ENCODE measurements at regions of chr18 and their contacts with region 1.

Region 1: GRCh38 chr18:616380-616995 is 19.7 kb downstream of the CLUL1 start:
- DNase-seq: peak; percentile 58
- ATAC-seq: peak; percentile 64; the same call in 1 of the 2 replicates
- H3K4me3 ChIP-seq: no peak overlapping the region
- H3K27ac ChIP-seq: no peak overlapping the region
- H3K4me1 ChIP-seq: no peaks in the 10 kb centered on the region
- H3K27me3 ChIP-seq: peaks cover 29% of the 10 kb centered on the region
- CTCF ChIP-seq: peak; percentile 85
- POLR2A ChIP-seq: no peak
- RAD21 ChIP-seq: peak; percentile 91

Region 2: DNA sequence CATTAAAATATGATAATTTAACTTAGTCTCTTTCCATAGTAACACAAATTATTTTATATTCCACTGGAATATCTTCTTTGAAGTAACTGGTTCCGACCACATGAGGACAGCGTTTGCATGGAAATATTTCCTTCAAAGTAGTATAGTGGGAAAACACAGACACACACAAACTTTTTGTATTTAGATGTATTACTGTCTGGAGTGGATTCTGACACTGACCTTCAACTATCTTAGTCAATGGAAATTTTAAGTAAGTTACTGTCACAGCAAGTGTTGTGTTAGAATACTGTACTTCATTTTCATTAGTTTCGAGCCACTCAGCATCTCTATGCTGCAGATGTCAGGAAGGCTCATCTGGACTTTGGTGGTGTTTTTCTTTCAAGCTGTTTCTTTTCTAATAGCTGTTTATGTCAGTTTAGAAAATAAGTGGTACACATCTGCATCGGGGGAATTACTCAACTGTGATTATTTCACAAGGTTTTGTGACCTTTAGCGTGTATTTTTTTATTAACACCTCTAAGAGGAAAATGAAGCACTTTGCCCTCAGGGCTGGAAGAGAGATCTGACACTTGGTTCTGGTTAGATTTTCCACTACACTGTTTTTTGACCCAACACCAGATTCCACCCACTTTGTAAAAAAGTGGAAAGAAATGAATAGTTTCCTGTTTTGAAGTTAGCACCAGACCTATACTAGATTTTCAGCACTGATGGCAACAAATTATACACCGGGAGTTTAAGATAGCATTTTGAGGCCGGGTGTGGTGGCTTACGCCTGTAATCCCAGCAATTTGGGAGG is 329.8 kb before region 1 on chr18:
- CTCF ChIA-PET with region 1: interaction called, 3 read pairs
- POLR2A ChIA-PET with region 1: no interaction called
- dilution Hi-C with region 1: no loop called
- in situ Hi-C with region 1: loop called (anchors 5 kb)
- intact Hi-C with region 1: loop called (anchors 1 kb)
- DNase-seq: peak; percentile 42
- ATAC-seq: peak; percentile 70
- H3K4me3 ChIP-seq: no peak overlapping the region
- H3K27ac ChIP-seq: no peak overlapping the region
- H3K4me1 ChIP-seq: no peaks in the 10 kb centered on the region
- H3K27me3 ChIP-seq: peaks cover 8% of the 10 kb centered on the region
- CTCF ChIP-seq: peak; percentile 85
- POLR2A ChIP-seq: peak; percentile 33; the same call in 1 of the 2 replicates
- RAD21 ChIP-seq: peak; percentile 91

Region 3: DNA sequence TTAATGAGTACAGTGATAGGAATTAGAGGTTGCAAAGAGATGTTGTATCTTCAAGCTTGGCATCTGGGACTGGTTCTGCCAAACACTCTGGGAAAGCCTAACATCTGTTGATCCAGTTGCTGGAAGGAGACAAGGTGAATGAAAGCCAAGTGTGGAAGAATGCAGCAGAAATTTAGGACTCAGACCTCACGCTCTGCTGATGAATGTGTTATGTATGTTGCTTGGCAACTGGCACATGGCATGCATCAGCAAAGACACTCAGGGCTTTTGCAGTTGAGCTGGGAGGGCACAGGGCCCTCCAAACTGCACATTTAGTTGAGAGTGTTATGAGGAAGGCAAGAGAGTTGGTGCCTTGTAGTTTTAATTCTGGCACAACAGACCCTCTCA is 221.5 kb before region 1 on chr18:
- CTCF ChIA-PET with region 1: interaction called, 4 read pairs
- POLR2A ChIA-PET with region 1: no interaction called
- dilution Hi-C with region 1: no loop called
- in situ Hi-C with region 1: no loop called
- intact Hi-C with region 1: loop called (anchors 10 kb)
- DNase-seq: peak; percentile 75
- ATAC-seq: peak; percentile 50
- H3K4me3 ChIP-seq: no peak overlapping the region
- H3K27ac ChIP-seq: peak overlapping the region; percentile 61; the same call in 1 of the 2 replicates
- H3K4me1 ChIP-seq: peaks cover 25% of the 10 kb centered on the region
- H3K27me3 ChIP-seq: 0 out of 2 replicates have a peak, but pooled peaks cover 1% of the 10 kb centered on the region
- CTCF ChIP-seq: no peak
- POLR2A ChIP-seq: no peak
- RAD21 ChIP-seq: no peak

Region 4: GRCh38 chr18:499551-500408 is 116.7 kb before region 1 on chr18:
- CTCF ChIA-PET with region 1: interaction called, 3 read pairs
- POLR2A ChIA-PET with region 1: no interaction called
- dilution Hi-C with region 1: no loop called
- in situ Hi-C with region 1: no loop called
- intact Hi-C with region 1: loop called (anchors 5 kb)
- DNase-seq: peak; percentile 85
- ATAC-seq: peak; percentile 60
- H3K4me3 ChIP-seq: peak overlapping the region; percentile 35
- H3K27ac ChIP-seq: no peak overlapping the region
- H3K4me1 ChIP-seq: peaks cover 5% of the 10 kb centered on the region; the same call in 1 of the 2 replicates
- H3K27me3 ChIP-seq: peaks cover 37% of the 10 kb centered on the region
- CTCF ChIP-seq: no peak
- POLR2A ChIP-seq: no peak
- RAD21 ChIP-seq: no peak